ENCODE measurements at regions of chr12 and their contacts with region 1.

Region 1: DNA sequence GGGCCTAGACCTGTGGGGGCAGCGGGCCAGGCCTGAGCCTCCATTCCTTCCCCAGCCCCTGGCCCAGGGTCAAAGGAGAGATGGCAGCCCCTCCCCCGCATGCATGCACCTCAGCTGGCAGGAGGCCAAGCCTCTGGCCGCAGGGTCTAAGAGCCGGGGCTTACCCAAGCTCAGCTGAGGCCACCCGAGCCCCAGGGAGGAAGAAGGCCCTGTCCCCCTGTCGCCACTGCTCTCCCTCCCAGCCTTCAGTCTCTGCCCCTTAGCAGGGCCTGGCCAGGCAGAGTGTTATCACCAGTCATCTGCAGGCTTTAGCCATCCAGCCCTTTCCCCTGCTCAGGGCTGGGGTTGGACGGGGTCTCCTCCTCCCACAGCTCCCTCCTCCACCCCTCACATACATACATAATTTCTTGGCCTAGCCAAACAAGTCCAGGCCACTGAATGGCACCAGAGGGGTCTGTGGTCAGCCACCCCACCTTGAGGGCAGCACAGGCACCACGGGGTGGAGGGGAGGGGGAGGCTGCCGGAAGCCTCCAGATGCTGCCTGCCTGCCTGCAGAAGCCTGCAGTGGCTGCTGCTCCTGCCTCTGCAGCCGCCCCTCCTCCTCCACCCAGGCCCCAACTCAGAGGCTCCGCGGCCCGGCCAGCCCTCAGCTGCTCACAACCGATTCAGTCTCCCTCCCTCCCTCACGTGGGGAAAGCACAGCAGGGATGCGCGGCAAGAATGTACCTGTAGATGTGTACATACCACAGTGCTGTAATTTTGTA is 22.8 kb downstream of the RAB35 start:
- DNase-seq: no peak

Region 2: DNA sequence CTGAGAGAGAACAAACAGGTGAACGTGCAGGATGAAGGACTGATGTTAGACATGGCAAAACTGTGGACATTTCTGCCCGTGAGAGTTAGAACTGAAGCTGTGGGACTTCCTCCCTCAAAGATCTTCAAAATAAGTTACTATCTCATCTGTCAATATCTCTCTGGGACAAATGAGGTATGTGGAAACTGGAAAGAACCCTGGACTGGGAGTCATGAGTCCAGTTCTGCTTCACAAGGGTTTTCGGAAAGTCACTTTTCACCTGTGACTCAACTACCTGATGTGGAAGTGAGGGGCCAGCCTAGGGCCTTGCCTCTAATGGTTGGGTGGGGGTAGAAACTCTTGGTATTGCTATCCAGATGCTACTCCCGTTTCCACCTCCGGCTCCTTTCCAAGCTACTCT is 24.5 kb before region 1 on chr12:
- intact Hi-C with region 1: loop called in 1 of 2 experiments (anchors 1 kb)
- DNase-seq: no peak

Measured in posterior vena cava (tissue), 2 donors.